PC-3 (cell line): ENCODE measurements at regions of chr12 and their contacts with region 1.

Region 1: DNA sequence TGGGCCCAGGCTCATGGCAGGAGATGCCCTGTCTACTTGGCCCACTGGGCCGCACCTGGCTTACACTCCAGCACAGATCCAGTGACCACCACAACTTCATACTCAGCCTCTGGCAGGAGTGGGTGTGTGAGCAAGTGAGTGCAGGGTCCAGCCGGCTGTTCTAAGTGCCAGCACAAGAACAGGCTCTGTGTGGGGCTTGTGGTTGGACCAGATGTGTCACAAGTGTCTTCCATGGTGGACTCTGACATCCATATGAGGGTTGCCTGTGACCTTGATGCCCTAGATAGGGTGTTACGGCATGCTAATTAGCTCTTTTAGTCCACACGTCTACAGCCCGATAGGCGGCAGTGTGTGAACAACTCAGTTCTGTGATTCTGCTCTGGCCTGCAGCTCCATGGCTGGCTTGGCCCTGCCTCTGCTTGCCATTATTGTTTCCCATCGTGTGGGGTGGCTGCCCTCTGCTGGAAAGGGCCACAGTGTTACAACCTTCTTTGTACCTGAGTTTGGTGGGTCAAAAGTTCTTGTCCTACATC is 1089.1 kb downstream of the SLC6A15 start:
- DNase-seq: peak; percentile 64
- ATAC-seq: peak; percentile 46; the same call in 1 of the 2 replicates
- H3K4me3 ChIP-seq: no peak overlapping the region
- H3K27ac ChIP-seq: no peak overlapping the region
- H3K4me1 ChIP-seq: peaks cover 10% of the 10 kb centered on the region
- H3K27me3 ChIP-seq: no peaks in the 10 kb centered on the region
- CTCF ChIP-seq: peak; percentile 76

Region 2: GRCh38 chr12:83753205-83753604 is 70.3 kb before region 1 on chr12:
- CTCF ChIA-PET with region 1: no interaction called
- POLR2A ChIA-PET with region 1: no interaction called
- intact Hi-C with region 1: no loop called
- DNase-seq: no peak
- ATAC-seq: no peak
- H3K4me3 ChIP-seq: no peak overlapping the region
- H3K27ac ChIP-seq: no peak overlapping the region
- H3K4me1 ChIP-seq: no peaks in the 10 kb centered on the region
- H3K27me3 ChIP-seq: no peaks in the 10 kb centered on the region
- CTCF ChIP-seq: no peak

Region 3: DNA sequence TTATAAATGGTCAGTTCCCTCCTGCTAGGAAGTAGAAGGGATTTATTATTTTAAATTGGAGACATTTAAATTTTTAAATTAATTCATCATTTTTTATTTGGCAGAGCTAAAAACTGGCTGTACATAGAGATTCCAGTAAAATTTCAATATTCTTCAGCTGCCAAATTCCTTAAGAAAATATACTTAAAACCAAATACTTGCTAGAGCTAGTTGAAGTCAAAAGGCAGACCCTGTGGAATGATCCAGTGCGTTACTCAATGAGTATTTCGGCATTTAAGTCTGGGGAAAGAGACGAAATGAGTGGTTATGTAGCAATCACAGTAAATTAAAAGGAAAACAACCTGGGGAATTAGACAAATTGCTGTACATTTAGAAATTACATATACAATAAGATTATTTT is 15.6 kb before region 1 on chr12:
- CTCF ChIA-PET with region 1: no interaction called
- POLR2A ChIA-PET with region 1: no interaction called
- intact Hi-C with region 1: loop called (anchors 1 kb)
- DNase-seq: no peak
- ATAC-seq: no peak
- H3K4me3 ChIP-seq: no peak overlapping the region
- H3K27ac ChIP-seq: no peak overlapping the region
- H3K4me1 ChIP-seq: peaks cover 19% of the 10 kb centered on the region
- H3K27me3 ChIP-seq: no peaks in the 10 kb centered on the region
- CTCF ChIP-seq: no peak

Region 4: DNA sequence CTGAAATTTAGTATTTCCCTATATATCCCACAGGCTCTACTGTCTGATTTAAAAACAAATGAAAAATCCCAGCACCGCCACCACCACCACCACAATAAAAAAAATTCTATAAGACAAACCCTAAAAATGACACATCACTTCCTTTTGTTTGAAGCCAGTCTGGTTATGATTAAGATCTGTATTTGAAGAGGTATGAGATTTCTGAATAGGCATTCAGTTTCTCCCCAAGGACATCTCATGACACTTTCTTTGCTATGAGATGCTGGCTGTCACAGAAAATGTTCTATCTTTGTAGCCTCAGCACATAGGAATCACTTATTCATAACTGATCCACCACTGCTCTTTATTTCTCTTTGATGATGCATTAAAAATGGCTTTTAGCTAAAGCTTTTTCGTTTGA is 18.1 kb after region 1 on chr12:
- CTCF ChIA-PET with region 1: no interaction called
- POLR2A ChIA-PET with region 1: no interaction called
- intact Hi-C with region 1: no loop called
- DNase-seq: peak; percentile 57
- ATAC-seq: peak; percentile 71
- H3K4me3 ChIP-seq: no peak overlapping the region
- H3K27ac ChIP-seq: no peak overlapping the region
- H3K4me1 ChIP-seq: peaks cover 7% of the 10 kb centered on the region; the same call in 1 of the 2 replicates
- H3K27me3 ChIP-seq: no peaks in the 10 kb centered on the region
- CTCF ChIP-seq: no peak

Region 5: GRCh38 chr12:83889745-83890144 is 66.2 kb after region 1 on chr12:
- CTCF ChIA-PET with region 1: no interaction called
- POLR2A ChIA-PET with region 1: no interaction called
- intact Hi-C with region 1: no loop called
- DNase-seq: no peak
- ATAC-seq: no peak
- H3K4me3 ChIP-seq: no peak overlapping the region
- H3K27ac ChIP-seq: no peak overlapping the region
- H3K4me1 ChIP-seq: no peaks in the 10 kb centered on the region
- H3K27me3 ChIP-seq: no peaks in the 10 kb centered on the region
- CTCF ChIP-seq: no peak